Activated CD4-positive, alpha-beta memory T cell treated with anti-CD3 and anti-CD28 coated beads for 36 hours (primary cell): ENCODE measurements at regions of chr6 and their contacts with region 1.

Region 1: DNA sequence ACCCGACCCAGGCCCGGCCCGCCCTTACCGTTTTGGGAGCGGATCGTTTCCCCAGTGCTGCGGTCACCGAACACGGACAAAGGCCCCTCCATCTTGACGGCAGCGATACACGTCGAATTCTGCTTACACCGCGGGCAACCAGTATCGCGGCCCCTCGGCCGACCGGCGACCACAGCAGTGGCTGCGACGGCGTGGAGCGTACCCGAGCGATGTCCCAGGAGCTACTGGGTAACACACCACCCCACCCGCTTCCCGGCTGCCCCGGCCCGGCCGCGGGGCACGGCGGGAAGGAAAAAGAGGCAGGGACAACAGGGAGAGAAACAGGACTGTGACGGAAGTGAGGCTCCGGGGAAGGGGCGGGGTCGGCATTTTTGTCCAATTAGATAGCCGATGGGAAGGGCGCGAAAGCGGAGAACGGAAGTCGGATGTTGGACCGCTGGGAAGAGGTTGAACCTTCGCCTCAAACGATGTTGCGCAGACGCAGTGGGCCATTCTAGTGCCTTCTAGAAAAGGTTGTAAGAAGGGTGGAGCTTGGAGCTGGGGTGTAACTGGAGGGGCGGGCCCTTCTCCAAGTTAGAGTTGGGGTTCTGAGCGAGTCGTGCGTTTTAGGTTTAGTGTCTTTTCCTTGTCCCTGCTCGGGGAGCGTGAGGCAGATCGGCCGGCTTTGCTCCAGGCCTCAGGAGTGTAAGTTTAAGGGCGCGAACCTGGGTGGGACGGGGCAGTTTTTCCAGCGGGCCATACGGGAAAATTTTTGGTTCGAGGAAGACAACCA is at the start of gene TCP1:
- DNase-seq: peak; percentile 100
- H3K4me3 Mint-ChIP-seq: peak within 1 kb of the TSS; percentile 96
- H3K27ac Mint-ChIP-seq: peak within 1 kb of the TSS; percentile 98
- H3K4me1 Mint-ChIP-seq: peaks cover 64% of the 10 kb centered on the region
- H3K27me3 Mint-ChIP-seq: no peaks in the 10 kb centered on the region
- total RNA-seq, gene TCP1: 429 to 438 TPM

Region 2: GRCh38 chr6:159761873-159762680 is 27.5 kb before region 1 on chr6 and contains the start of gene ACAT2:
- CTCF ChIA-PET with region 1: no interaction called
- POLR2A ChIA-PET with region 1: interaction called, 24 read pairs
- intact Hi-C with region 1: loop called (anchors 1 kb)
- DNase-seq: peak; percentile 97
- H3K4me3 Mint-ChIP-seq: peak within 1 kb of the TSS; percentile 98
- H3K27ac Mint-ChIP-seq: peak within 1 kb of the TSS; percentile 98
- H3K4me1 Mint-ChIP-seq: peaks cover 45% of the 10 kb centered on the region
- H3K27me3 Mint-ChIP-seq: no peaks in the 10 kb centered on the region
- total RNA-seq, gene ACAT2: 115 to 116 TPM

Region 3: GRCh38 chr6:160102956-160103824 is 313.6 kb after region 1 on chr6:
- CTCF ChIA-PET with region 1: no interaction called
- POLR2A ChIA-PET with region 1: no interaction called
- intact Hi-C with region 1: loop called (anchors 2 kb)
- DNase-seq: peak; percentile 25
- H3K4me3 Mint-ChIP-seq: no peak overlapping the region
- H3K27ac Mint-ChIP-seq: no peak overlapping the region
- H3K4me1 Mint-ChIP-seq: peaks cover 14% of the 10 kb centered on the region
- H3K27me3 Mint-ChIP-seq: no peaks in the 10 kb centered on the region

Region 4: GRCh38 chr6:160462551-160463109 is 673.1 kb after region 1 on chr6:
- CTCF ChIA-PET with region 1: no interaction called
- POLR2A ChIA-PET with region 1: no interaction called
- intact Hi-C with region 1: loop called (anchors 5 kb)
- DNase-seq: peak; percentile 64
- H3K4me3 Mint-ChIP-seq: peak overlapping the region; percentile 42
- H3K27ac Mint-ChIP-seq: peak overlapping the region; percentile 68
- H3K4me1 Mint-ChIP-seq: peaks cover 72% of the 10 kb centered on the region
- H3K27me3 Mint-ChIP-seq: peaks cover 14% of the 10 kb centered on the region